ENCODE measurements at regions of chr4 and their contacts with region 1.

Region 1: GRCh38 chr4:151930377-151930776 is 169.6 kb upstream of the GATB start:
- DNase-seq: peak in 4 of 5 donors; percentile 12 to 63 (median 26)
- ATAC-seq: peak in 3 of 4 donors; percentile 61 to 77 (median 69)
- H3K4me3 ChIP-seq: no peak overlapping the region
- H3K27ac ChIP-seq: no peak overlapping the region
- H3K4me1 ChIP-seq: peaks cover 0 to 2% (median 0%) of the 10 kb centered on the region in 12 donors
- H3K27me3 ChIP-seq: no peaks in the 10 kb centered on the region
- CTCF ChIP-seq: no peak
- POLR2A ChIP-seq: no peak

Region 2: DNA sequence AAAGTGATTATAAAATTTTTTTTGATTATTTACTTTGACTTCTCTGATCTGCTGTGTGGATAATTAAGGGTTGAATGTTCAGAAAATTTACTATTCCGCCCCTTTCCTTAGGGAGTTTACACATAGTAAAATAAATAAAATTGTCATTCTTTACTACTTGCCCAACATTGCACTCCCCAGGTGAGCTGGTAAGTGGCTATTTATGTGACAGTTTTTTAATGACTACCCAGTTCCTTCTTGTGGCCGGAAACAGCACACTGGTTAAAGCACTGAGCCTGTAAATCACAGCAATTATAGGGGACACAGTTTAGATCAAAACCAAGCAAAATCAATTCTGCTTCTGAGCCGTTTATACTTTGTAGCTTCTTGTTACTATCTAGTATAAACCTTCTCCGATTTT is 363.3 kb before region 1 on chr4:
- intact Hi-C with region 1: loop called in 1 of 10 experiments (anchors 10 kb)
- DNase-seq: no peak
- ATAC-seq: no peak
- H3K4me3 ChIP-seq: no peak overlapping the region
- H3K27ac ChIP-seq: no peak overlapping the region
- H3K4me1 ChIP-seq: peaks cover 0 to 5% (median 0%) of the 10 kb centered on the region in 12 donors
- H3K27me3 ChIP-seq: no peaks in the 10 kb centered on the region
- CTCF ChIP-seq: no peak
- POLR2A ChIP-seq: no peak

Region 3: DNA sequence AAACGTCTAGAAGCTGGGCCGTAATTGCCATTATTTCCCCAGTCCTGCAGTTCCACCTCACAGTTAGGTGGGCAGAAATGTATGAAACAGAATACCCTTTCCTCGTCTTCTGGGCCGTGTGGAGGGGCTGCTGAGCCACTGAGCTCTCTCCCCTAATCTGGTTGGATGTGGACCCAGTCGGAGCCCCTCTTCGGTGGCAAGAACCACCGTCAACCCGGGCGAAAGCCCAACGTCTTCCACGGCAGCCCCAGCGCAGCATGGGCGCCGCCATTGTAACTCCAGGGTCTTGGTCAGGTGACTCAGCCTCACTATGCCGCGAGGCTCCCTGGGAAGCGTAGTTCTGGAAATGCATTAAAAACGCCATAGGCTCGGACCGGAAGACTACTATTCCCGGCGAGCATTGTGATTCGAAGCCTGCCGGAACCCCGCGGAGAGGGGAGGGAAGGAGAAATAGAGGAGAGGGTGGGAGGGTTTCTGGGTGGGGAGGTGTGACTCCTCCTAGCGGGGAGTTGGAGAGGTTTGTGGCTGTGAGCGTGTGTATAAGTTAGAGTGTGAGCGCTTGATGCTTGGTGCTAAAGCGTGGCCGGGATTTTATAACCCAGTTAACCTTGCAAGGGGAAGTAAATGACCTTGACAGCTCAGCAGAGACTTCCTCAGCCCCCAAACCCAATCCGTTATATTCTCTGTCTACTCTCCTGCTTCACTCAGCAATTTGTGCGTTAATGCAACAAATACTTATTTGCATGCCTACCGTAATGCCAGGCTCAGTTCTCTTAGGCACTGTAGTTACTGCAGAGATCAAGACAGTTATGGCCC is 169.5 kb before region 1 on chr4 and contains the start of gene GATB:
- intact Hi-C with region 1: loop called in 1 of 10 experiments (anchors 5 kb)
- DNase-seq: peak; percentile 94 to 96 (median 94)
- ATAC-seq: peak; percentile 99 to 100 (median 100)
- H3K4me3 ChIP-seq: peak within 1 kb of the TSS; percentile 57 to 91 (median 76)
- H3K27ac ChIP-seq: peak within 1 kb of the TSS; percentile 58 to 85 (median 79)
- H3K4me1 ChIP-seq: peaks cover 0 to 16% (median 7%) of the 10 kb centered on the region in 12 donors
- H3K27me3 ChIP-seq: no peaks in the 10 kb centered on the region
- CTCF ChIP-seq: peak; percentile 44 to 69 (median 54)
- POLR2A ChIP-seq: peak in 1 of 2 donors; percentile 52
- total RNA-seq, gene GATB: 60.7 to 122 (median 83.4) TPM

Region 4: GRCh38 chr4:151833174-151833573 is 97.2 kb before region 1 on chr4:
- intact Hi-C with region 1: no loop called
- DNase-seq: no peak
- ATAC-seq: no peak
- H3K4me3 ChIP-seq: no peak overlapping the region
- H3K27ac ChIP-seq: no peak overlapping the region
- H3K4me1 ChIP-seq: peaks cover 0 to 4% (median 0%) of the 10 kb centered on the region in 12 donors
- H3K27me3 ChIP-seq: no peaks in the 10 kb centered on the region
- CTCF ChIP-seq: no peak
- POLR2A ChIP-seq: no peak

Region 5: GRCh38 chr4:151990201-151990600 is 59.8 kb after region 1 on chr4:
- intact Hi-C with region 1: no loop called
- DNase-seq: no peak
- ATAC-seq: no peak
- H3K4me3 ChIP-seq: no peak overlapping the region
- H3K27ac ChIP-seq: peak overlapping the region in 3 of 12 donors; percentile 29 to 58 (median 56)
- H3K4me1 ChIP-seq: peaks cover 0 to 30% (median 8%) of the 10 kb centered on the region in 12 donors
- H3K27me3 ChIP-seq: no peaks in the 10 kb centered on the region
- CTCF ChIP-seq: no peak
- POLR2A ChIP-seq: no peak